ENCODE measurements at regions of chr4 and their contacts with region 1.

Region 1: DNA sequence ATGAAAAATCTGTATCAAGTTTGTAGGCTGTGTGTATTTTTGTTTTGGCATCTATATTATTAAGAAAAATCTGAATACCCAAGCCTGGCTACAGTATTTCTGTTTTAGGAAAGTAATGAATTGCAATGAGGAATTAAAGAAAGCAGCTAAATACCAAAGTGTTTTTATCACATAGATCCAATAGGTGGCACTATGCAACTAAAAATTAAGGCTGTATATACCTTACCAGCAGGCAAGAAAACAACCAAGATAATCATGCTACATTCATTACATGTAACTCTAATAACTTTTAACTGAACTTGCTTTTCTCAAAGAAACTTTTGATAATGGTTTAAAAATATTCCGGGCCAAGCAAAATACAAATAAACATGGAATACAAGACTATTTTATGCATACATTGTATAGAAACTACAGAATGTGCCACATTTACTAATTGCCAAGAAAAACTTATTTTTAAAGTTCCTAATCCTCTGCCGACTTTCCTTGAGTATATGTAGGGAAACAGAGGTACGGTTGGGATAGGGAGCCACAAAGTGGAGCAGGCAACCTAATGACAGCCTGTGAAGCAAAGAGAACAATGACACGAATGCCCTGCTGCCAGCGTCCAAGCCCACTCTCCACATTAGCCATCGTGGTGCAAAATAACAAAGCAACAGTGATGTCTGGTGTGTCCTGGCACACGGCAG is 63.7 kb downstream of the SEC24D start:
- H3K4me3 ChIP-seq: no peak overlapping the region
- H3K27ac ChIP-seq: no peak overlapping the region
- H3K4me1 ChIP-seq: no peaks in the 10 kb centered on the region
- CTCF ChIP-seq: no peak

Region 2: GRCh38 chr4:118888666-118889311 is 116.6 kb after region 1 on chr4 and contains the start of gene SYNPO2:
- CTCF ChIA-PET with region 1: interaction called, 50 read pairs
- POLR2A ChIA-PET with region 1: interaction called, 3 read pairs
- H3K4me3 ChIP-seq: peak within 1 kb of the TSS; percentile 42
- H3K27ac ChIP-seq: no peak within 1 kb of the TSS
- H3K4me1 ChIP-seq: no peaks in the 10 kb centered on the region
- CTCF ChIP-seq: no peak; the same call in 1 of the 2 replicates

Region 3: GRCh38 chr4:118968005-118968404 is 195.8 kb after region 1 on chr4:
- CTCF ChIA-PET with region 1: interaction called, 27 read pairs
- POLR2A ChIA-PET with region 1: no interaction called
- H3K4me3 ChIP-seq: no peak overlapping the region
- H3K27ac ChIP-seq: no peak overlapping the region
- H3K4me1 ChIP-seq: no peaks in the 10 kb centered on the region
- CTCF ChIP-seq: no peak